OCI-LY7 (cell line): ENCODE measurements at regions of chr4 and their contacts with region 1.

Region 1: DNA sequence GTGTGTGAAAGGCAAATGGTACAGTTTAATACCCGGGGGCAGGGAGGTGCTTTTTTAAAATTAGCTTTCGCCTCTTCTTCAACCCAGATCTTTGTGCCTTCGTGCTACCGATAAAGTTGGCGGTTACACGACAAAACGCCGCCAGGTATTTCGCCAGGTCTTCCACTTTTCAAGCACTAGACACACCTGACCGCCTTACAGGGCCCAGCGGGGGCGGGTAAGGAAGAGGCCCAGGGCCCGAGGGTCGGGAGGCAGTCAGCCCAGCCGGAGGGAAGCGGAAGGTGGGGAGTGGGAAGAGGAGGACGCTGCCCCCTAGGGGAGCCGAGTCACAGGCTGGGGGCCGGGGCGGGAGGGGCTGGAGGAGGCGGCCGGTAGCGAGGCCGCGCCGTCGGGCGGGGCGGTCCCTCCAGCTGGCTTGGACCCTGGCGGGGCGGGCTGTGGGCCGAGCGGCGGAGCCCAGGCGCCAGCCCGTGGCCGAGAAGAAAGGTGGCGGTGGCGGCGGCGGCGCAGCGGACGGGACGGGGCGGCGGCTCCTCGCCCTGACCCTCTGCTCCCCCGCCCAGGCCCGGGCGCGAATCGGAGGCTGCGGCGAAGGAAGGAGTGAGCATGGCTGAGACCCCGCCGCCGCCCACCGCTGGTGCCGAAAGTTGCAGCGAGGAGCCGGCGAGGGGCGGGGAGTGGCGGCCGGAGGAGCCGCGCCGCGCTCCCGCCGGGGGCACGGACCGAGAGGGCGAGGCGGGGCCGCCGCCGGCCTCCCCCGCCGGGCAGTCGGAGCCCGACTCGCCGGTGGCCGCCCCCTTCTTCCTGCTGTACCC is 16.2 kb downstream of the UTP3 start:
- DNase-seq: peak; percentile 85
- H3K4me3 ChIP-seq: peak overlapping the region; percentile 90
- H3K27ac ChIP-seq: peak overlapping the region; percentile 77
- H3K4me1 ChIP-seq: peaks cover 32% of the 10 kb centered on the region
- CTCF ChIP-seq: peak; percentile 71

Region 2: GRCh38 chr4:70251250-70251944 is 453.1 kb before region 1 on chr4:
- CTCF ChIA-PET with region 1: no interaction called
- POLR2A ChIA-PET with region 1: no interaction called
- intact Hi-C with region 1: no loop called
- DNase-seq: no peak
- H3K4me3 ChIP-seq: no peak overlapping the region
- H3K27ac ChIP-seq: no peak overlapping the region
- H3K4me1 ChIP-seq: no peaks in the 10 kb centered on the region
- CTCF ChIP-seq: no peak

Region 3: GRCh38 chr4:70678383-70678999 is 26.0 kb before region 1 on chr4:
- CTCF ChIA-PET with region 1: no interaction called
- POLR2A ChIA-PET with region 1: interaction called, 11 read pairs
- intact Hi-C with region 1: no loop called
- DNase-seq: peak; percentile 96
- H3K4me3 ChIP-seq: peak overlapping the region; percentile 44
- H3K27ac ChIP-seq: peak overlapping the region; percentile 97
- H3K4me1 ChIP-seq: peaks cover 88% of the 10 kb centered on the region
- CTCF ChIP-seq: no peak